Thyroid gland (tissue), 4 donors: ENCODE measurements at regions of chr5 and their contacts with region 1.

Region 1: GRCh38 chr5:43227655-43228054 is 35.6 kb downstream of the NIM1K start:
- DNase-seq: no peak
- H3K4me3 ChIP-seq: no peak overlapping the region
- H3K27ac ChIP-seq: no peak overlapping the region
- H3K4me1 ChIP-seq: no peaks in the 10 kb centered on the region
- H3K27me3 ChIP-seq: no peaks in the 10 kb centered on the region
- CTCF ChIP-seq: peak in 5 of 6 experiments; percentile 21 to 73 (median 55)
- POLR2A ChIP-seq: no peak

Region 2: DNA sequence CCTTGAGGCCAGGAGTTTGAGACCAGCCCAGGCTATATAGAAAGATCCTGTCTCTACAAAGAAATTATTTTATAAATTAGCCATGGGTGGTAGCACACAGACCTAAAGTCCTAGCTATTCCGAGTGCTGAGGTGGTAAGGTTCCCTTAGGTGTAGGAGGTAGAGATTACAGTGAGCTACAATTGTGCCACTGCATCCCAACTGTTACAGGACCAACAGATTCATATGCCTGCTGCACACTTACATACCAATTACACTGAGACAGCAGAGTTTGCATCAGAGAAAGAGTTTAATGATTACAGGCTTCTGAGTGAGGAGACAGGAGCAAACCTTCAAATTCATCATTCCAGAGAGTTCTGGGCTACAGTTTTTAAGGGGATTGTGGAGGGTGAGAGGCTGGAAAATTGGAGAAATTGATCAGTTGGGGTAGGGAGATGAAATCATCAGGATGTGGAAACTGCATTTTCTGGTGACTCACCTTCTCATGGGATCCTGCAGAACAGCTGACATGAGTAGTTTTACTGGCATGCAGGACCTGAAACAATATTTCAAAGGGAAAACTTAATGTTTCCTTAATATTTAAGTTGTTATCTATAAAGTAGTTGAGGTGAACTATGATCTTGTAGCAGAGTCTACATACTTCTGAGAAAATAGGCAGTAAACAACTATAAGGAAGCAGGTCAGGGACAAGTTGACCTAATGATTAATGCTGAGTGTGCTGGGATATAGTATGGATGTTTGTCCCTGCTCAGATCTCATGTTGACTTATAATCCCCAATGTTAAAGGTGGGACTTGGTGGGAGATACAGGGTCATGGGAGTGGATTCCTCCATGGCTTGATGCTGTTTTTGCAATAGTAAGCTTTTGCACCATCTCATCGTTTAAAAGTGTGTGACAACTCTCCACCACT is 242.3 kb before region 1 on chr5:
- intact Hi-C with region 1: no loop called
- DNase-seq: no peak
- H3K4me3 ChIP-seq: no peak overlapping the region
- H3K27ac ChIP-seq: no peak overlapping the region
- H3K4me1 ChIP-seq: peaks cover 0 to 4% of the 10 kb centered on the region in 2 donors
- H3K27me3 ChIP-seq: no peaks in the 10 kb centered on the region
- CTCF ChIP-seq: no peak
- POLR2A ChIP-seq: no peak

Region 3: GRCh38 chr5:43008369-43009153 is 219.1 kb before region 1 on chr5:
- intact Hi-C with region 1: no loop called
- DNase-seq: peak; percentile 42 to 50
- H3K4me3 ChIP-seq: peak overlapping the region in 2 of 3 donors; percentile 21 to 27
- H3K27ac ChIP-seq: peak overlapping the region; percentile 61 to 78 (median 64)
- H3K4me1 ChIP-seq: peaks cover 0 to 7% of the 10 kb centered on the region in 2 donors
- H3K27me3 ChIP-seq: peaks cover 31% of the 10 kb centered on the region
- CTCF ChIP-seq: no peak
- POLR2A ChIP-seq: no peak

Region 4: GRCh38 chr5:43389679-43390329 is 162.1 kb after region 1 on chr5:
- intact Hi-C with region 1: loop called (anchors 10 kb)
- DNase-seq: peak; percentile 55 to 59
- H3K4me3 ChIP-seq: no peak overlapping the region
- H3K27ac ChIP-seq: no peak overlapping the region
- H3K4me1 ChIP-seq: no peaks in the 10 kb centered on the region
- H3K27me3 ChIP-seq: no peaks in the 10 kb centered on the region
- CTCF ChIP-seq: peak; percentile 78 to 92 (median 84)
- POLR2A ChIP-seq: no peak